ENCODE measurements at regions of chr2 and their contacts with region 1.

Region 1: DNA sequence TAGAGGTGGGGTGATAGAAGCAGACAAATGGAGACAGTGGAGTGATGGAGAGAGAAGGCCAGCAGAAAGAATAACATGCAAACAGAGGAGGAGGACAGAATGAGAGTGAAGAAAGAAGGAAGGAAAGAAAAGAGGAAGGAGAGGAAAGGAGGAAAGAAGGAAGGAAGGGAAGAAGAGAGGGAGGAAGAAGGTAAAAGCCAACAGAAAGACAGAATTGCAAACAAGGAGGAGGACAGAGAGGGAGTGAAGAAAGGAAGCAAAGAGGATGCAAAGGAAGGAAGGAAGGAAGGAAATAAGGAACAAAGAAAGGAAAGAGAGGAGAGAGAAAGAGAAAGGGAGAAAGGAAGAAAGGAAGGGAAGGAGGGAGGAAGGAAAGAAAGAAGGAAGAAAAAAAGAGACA is 444.0 kb downstream of the IRS1 start:
- DNase-seq: no peak
- H3K4me3 ChIP-seq: no peak overlapping the region
- H3K27ac ChIP-seq: no peak overlapping the region
- H3K27me3 ChIP-seq: no peaks in the 10 kb centered on the region
- CTCF ChIP-seq: no peak

Region 2: DNA sequence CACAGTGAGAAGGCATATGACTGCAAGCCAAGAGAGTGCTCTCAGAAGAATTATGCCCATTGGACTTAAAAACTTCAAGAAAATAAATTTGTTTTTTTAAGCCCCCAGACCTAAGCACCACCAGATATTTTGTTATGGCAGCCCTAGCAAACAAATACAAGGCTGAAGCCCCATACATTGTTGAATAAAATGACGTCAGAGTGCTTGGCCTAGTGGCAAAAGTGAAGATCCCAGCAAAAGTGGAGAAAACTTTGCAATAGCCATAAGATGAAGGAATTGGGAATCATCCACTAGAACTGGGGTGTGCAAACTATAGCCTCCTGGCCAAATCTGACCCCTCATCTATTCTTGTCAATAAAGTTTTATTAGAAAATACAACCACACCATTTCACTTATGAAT is 73.5 kb before region 1 on chr2:
- CTCF ChIA-PET with region 1: no interaction called
- POLR2A ChIA-PET with region 1: interaction called, 11 read pairs
- DNase-seq: no peak
- H3K4me3 ChIP-seq: no peak overlapping the region
- H3K27ac ChIP-seq: no peak overlapping the region
- H3K27me3 ChIP-seq: no peaks in the 10 kb centered on the region
- CTCF ChIP-seq: no peak

Measured in AG04450 (cell line).